ENCODE measurements at regions of chr11 and their contacts with region 1.

Region 1: GRCh38 chr11:10322830-10323792 is 18.2 kb downstream of the ADM start:
- DNase-seq: peak; percentile 85
- H3K4me3 ChIP-seq: no peak overlapping the region
- H3K27ac ChIP-seq: peak overlapping the region; percentile 75 to 81 (median 80)
- H3K4me1 ChIP-seq: peaks cover 0 to 88% (median 77%) of the 10 kb centered on the region in 4 donors
- H3K27me3 ChIP-seq: no peaks in the 10 kb centered on the region
- CTCF ChIP-seq: peak; percentile 45 to 79 (median 54)
- EP300 ChIP-seq: peak in 1 of 4 donors; percentile 5
- POLR2A ChIP-seq: no peak

Region 2: GRCh38 chr11:9861860-9862725 is 461.0 kb before region 1 on chr11:
- intact Hi-C with region 1: loop called (anchors 5 kb)
- DNase-seq: peak; percentile 74
- H3K4me3 ChIP-seq: no peak overlapping the region
- H3K27ac ChIP-seq: no peak overlapping the region
- H3K4me1 ChIP-seq: peaks cover 0 to 12% (median 7%) of the 10 kb centered on the region in 4 donors
- H3K27me3 ChIP-seq: no peaks in the 10 kb centered on the region
- CTCF ChIP-seq: peak; percentile 11 to 60 (median 57)
- EP300 ChIP-seq: no peak
- POLR2A ChIP-seq: no peak

Region 3: GRCh38 chr11:10338287-10338686 is 15.2 kb after region 1 on chr11:
- intact Hi-C with region 1: no loop called
- DNase-seq: no peak
- H3K4me3 ChIP-seq: no peak overlapping the region
- H3K27ac ChIP-seq: no peak overlapping the region
- H3K4me1 ChIP-seq: no peaks in the 10 kb centered on the region
- H3K27me3 ChIP-seq: no peaks in the 10 kb centered on the region
- CTCF ChIP-seq: no peak
- EP300 ChIP-seq: no peak
- POLR2A ChIP-seq: no peak

Region 4: DNA sequence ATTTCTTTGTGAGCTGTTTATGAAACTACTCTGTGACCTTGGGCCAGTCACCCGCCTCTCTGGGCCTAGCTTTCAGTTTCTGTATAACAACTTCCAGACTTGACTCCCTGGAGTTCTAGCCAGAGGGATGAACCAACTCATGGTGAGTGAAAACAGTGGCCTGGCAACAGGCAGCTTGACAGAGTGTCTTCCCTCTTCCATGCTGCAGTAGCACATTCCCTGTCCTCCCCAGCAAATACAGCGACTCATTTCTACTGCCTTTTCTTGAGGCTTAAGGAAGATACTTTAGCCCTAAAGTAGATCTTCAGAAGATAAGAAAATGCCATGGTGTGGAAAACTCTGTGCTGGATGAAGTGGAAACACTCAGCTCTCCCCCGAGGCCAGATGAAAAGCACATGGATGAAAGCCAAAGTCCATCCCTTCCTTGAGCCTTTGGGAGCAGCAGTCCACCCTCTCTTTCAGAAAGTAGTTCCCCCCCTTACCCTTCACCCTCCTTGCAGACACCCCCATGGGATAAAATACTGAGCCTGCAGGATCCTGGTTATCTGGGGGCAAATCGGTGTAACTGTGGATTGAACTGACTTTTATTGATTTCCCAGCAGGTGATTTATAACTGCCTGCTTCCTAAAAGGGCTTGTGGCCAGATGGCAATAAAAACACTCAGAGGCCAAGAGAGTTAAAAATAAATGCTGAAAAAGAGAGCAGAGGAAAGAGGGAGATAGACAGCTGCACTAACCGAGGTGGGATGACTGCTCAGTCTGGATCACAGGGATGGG is 346.3 kb after region 1 on chr11:
- intact Hi-C with region 1: loop called (anchors 10 kb)
- DNase-seq: peak; percentile 79
- H3K4me3 ChIP-seq: no peak overlapping the region
- H3K27ac ChIP-seq: peak overlapping the region; percentile 75 to 89 (median 84)
- H3K4me1 ChIP-seq: peaks cover 0 to 92% (median 88%) of the 10 kb centered on the region in 4 donors
- H3K27me3 ChIP-seq: no peaks in the 10 kb centered on the region
- CTCF ChIP-seq: no peak
- EP300 ChIP-seq: no peak
- POLR2A ChIP-seq: no peak